Transverse colon (tissue), 4 donors: ENCODE measurements at regions of chr1 and their contacts with region 1.

Region 1: DNA sequence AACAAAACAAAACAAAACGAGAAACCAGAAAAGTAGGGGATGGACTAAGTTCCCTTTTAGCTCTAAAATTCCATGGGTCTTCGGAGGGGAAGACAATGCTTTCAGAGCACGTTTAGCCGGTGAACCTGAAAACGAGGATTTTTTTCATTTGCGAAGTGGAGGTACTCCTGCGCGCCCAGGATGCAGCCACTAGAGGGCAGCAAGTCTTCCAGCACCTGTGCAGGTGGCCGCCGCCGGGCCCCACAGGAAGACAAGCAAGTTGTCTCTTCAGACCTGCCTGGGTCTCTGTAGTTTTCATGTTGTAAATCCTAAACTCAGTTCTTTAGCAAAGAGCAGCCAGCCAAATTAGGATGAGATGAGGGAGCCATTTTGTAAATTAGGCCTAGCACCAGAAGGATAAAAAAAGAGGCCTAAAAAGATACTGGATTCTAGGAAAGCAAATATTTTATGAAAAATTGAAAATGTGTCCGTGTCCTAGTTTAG is 17.7 kb upstream of the SNX27 start:
- DNase-seq: peak; percentile 91
- H3K4me3 ChIP-seq: no peak overlapping the region
- H3K27ac ChIP-seq: no peak overlapping the region
- H3K4me1 ChIP-seq: peaks cover 0 to 8% (median 0%) of the 10 kb centered on the region in 4 donors
- H3K27me3 ChIP-seq: no peaks in the 10 kb centered on the region
- CTCF ChIP-seq: peak; percentile 79 to 94 (median 89)
- EP300 ChIP-seq: no peak
- POLR2A ChIP-seq: no peak

Region 2: DNA sequence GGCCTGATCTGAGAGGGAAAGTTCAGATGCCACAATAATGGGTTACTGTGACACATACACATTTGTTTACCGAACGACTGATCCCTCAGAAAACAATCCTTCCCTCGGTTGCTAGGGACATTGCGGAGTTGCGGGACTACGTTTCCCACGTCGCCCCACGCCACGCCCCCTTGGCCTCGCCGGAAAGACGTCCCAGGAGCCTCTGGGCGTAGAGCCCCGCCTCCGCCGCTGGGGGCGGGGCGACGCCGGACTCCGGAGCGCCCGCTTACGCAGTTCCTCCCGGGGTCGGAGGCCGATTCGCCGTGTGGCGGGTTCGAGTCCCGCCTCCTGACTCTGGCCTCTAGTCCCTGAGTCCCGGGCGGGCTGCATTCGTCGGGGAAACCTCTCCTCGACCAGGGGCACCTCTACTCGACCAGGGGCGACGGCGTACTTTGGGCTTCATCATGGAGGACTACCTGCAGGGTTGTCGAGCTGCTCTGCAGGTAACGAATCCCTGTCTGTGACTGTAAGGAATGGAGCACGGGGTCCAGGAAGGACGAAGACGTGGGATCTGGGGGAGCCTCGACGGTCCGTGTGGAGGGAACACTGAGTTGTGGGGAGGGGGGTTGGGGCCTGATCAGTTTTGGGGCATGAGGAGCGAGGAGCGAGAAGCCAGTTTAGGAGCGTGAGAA is 585.9 kb before region 1 on chr1 and contains the start of gene PRUNE1:
- in situ Hi-C with region 1: no loop called
- intact Hi-C with region 1: no loop called
- DNase-seq: peak; percentile 99
- H3K4me3 ChIP-seq: peak within 1 kb of the TSS; percentile 57 to 86 (median 62)
- H3K27ac ChIP-seq: peak within 1 kb of the TSS; percentile 89 to 96 (median 92)
- H3K4me1 ChIP-seq: peaks cover 47 to 80% (median 56%) of the 10 kb centered on the region in 4 donors
- H3K27me3 ChIP-seq: no peaks in the 10 kb centered on the region
- CTCF ChIP-seq: peak in 1 of 5 experiments; percentile 28
- EP300 ChIP-seq: no peak
- POLR2A ChIP-seq: peak; percentile 48
- total RNA-seq, gene PRUNE1: 9.0 to 80.4 (median 26.8) TPM

Region 3: GRCh38 chr1:151703813-151704212 is 109.6 kb after region 1 on chr1:
- in situ Hi-C with region 1: no loop called
- intact Hi-C with region 1: loop called (anchors 1 kb)
- DNase-seq: no peak
- H3K4me3 ChIP-seq: no peak overlapping the region
- H3K27ac ChIP-seq: no peak overlapping the region
- H3K4me1 ChIP-seq: peaks cover 0 to 9% (median 4%) of the 10 kb centered on the region in 4 donors
- H3K27me3 ChIP-seq: no peaks in the 10 kb centered on the region
- CTCF ChIP-seq: no peak
- EP300 ChIP-seq: no peak
- POLR2A ChIP-seq: no peak

Region 4: GRCh38 chr1:151728151-151729054 is 134.2 kb after region 1 on chr1:
- in situ Hi-C with region 1: loop called in 3 of 4 experiments (anchors 5 to 25 kb)
- intact Hi-C with region 1: loop called (anchors 5 kb)
- DNase-seq: no peak
- H3K4me3 ChIP-seq: no peak overlapping the region
- H3K27ac ChIP-seq: peak overlapping the region; percentile 20 to 76 (median 64)
- H3K4me1 ChIP-seq: peaks cover 0 to 49% (median 30%) of the 10 kb centered on the region in 4 donors
- H3K27me3 ChIP-seq: no peaks in the 10 kb centered on the region
- CTCF ChIP-seq: no peak
- EP300 ChIP-seq: no peak
- POLR2A ChIP-seq: no peak

Region 5: DNA sequence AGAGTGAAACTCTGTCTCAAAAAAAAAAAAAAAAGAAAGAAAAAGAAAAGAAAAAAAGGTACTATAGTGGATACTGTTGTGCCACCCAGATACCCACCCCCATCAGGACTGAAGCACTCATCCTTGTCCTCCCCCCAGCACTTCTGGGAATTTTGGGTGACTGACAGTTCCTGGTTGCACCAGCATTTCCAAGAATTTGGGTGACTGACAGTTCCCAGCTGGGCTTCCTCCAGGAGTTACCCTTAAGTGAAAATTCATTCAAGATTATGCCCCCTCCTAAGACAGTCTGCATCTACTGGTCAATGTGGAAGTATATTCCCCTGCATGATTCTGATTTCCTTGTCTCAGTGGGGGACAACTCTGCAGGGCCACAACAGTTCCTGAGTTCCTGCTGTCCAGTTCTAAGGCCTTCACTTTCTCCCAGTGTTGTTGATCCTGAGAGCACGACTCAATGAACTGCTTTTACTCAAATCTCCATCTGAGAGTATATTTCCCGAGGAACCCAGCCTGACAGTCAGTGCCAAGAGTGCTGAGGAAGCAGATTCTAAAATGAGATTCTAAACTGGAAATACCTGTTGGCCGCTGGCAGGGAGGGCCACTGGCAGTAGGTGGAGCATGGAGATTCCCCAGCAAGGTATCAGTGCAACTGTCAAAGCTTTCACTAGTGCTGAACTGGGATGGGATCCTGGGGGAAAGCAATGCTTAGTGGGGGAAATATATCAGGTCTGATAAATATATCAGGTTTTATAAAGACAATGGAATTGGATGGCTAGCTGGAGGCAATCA is 145.6 kb after region 1 on chr1:
- in situ Hi-C with region 1: loop called in 3 of 4 experiments (anchors 5 to 25 kb)
- intact Hi-C with region 1: loop called (anchors 5 kb)
- DNase-seq: peak; percentile 50
- H3K4me3 ChIP-seq: no peak overlapping the region
- H3K27ac ChIP-seq: no peak overlapping the region
- H3K4me1 ChIP-seq: peaks cover 0 to 5% (median 0%) of the 10 kb centered on the region in 4 donors
- H3K27me3 ChIP-seq: no peaks in the 10 kb centered on the region
- CTCF ChIP-seq: no peak
- EP300 ChIP-seq: no peak
- POLR2A ChIP-seq: no peak